Activated CD4-positive, alpha-beta T cell treated with anti-CD3 and anti-CD28 coated beads for 36 hours (primary cell): ENCODE measurements at regions of chr1 and their contacts with region 1.

Region 1: DNA sequence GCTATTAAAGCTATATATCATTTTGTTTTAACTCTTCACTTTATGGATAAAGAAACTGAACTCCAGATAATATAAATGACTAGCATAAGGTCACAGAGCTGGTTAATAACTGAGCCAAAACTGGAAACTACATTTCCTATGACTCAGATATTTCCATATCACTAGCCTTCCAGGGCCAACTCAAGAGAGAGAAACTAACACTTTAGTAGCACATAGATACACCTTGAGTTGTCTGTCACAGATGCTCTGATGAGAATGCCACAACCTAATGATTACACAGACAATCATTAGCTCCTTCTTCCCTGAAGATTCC is 40.7 kb downstream of the NME7 start:
- DNase-seq: no peak
- ATAC-seq: peak; percentile 96
- H3K4me3 Mint-ChIP-seq: no peak overlapping the region
- H3K27ac Mint-ChIP-seq: no peak overlapping the region
- H3K4me1 Mint-ChIP-seq: peaks cover 19% of the 10 kb centered on the region
- H3K27me3 Mint-ChIP-seq: no peaks in the 10 kb centered on the region

Region 2: DNA sequence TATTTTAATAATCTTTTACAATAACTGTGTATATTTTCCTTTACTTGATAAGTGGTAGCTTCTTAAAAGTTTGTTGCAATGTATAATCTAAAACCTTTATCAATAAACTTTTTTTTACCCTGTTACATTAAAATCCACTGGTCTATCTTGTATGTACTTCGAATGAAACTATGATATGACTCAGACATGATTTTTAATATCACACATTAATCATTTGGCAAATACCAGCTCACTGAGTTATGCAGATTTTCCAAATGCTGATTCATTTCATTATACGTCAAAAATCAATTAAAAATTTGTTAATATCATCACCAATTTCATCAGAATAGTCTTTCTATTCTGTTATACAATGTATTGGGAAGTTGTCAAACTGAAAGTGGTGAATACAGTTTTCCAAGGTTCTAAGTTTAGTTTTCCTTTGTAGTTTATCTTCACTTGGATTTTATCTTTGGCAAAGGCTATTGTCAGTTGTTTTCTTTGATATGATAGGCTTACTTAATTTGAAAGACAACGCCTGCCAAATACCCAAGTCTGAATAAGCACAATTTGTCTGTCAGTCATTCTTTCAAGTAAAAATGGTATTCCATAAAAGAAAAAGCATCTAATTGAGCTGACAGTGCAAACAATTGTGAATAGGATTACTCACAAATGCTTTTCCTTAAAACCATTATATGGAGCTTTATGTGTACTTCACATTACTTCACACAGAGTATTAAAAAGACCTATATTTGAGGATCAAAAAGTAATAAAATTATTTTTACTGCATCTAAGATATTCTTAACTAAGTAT is 86.3 kb before region 1 on chr1:
- CTCF ChIA-PET with region 1: no interaction called
- POLR2A ChIA-PET with region 1: no interaction called
- intact Hi-C with region 1: loop called in 1 of 2 experiments (anchors 5 kb)
- DNase-seq: no peak
- ATAC-seq: peak; percentile 69
- H3K4me3 Mint-ChIP-seq: no peak overlapping the region
- H3K27ac Mint-ChIP-seq: no peak overlapping the region
- H3K4me1 Mint-ChIP-seq: peaks cover 19% of the 10 kb centered on the region
- H3K27me3 Mint-ChIP-seq: no peaks in the 10 kb centered on the region